Posterior cingulate gyrus (tissue), 11 donors: ENCODE measurements at regions of chr2 and their contacts with region 1.

Region 1: DNA sequence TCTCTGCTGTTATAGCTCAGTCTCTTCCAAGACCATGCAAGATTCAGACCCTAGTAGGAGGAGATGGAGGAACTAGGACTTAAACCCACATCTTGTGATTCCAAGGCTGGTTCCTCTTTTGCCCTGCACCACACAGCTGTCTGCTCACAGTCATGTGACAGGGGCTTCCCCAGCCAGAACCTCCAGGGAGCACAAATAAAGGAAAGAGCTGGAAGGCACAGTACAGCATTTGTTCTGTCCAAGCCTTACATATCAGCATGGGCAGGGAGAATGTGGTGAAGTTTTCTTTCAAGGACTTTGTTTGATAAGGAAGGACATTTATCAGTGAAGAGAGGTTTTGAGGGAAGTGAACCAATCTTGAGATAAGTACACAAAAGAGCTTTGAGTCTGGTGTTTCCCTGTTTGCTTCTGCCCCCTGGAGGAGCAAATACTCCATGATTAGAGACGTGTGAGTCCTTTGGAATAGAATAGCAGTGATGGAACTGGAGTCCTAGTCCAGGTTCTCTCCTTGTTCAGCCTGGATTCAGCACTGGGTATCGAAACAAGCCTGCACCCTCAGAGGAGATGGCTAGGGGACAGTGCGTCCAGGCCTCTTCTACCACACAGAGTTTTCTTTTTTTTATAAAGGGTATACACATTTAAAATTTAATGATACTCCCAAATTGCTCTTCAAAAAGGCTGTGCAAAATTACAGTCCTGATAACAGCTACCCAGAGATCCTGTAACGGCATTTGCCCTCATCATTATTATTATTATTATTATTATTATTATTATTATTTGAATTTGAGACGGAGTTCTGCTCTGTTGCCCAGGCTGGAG is 24.6 kb upstream of the CASP10 start:
- DNase-seq: peak in 8 of 10 donors; percentile 50 to 91 (median 62)

Region 2: DNA sequence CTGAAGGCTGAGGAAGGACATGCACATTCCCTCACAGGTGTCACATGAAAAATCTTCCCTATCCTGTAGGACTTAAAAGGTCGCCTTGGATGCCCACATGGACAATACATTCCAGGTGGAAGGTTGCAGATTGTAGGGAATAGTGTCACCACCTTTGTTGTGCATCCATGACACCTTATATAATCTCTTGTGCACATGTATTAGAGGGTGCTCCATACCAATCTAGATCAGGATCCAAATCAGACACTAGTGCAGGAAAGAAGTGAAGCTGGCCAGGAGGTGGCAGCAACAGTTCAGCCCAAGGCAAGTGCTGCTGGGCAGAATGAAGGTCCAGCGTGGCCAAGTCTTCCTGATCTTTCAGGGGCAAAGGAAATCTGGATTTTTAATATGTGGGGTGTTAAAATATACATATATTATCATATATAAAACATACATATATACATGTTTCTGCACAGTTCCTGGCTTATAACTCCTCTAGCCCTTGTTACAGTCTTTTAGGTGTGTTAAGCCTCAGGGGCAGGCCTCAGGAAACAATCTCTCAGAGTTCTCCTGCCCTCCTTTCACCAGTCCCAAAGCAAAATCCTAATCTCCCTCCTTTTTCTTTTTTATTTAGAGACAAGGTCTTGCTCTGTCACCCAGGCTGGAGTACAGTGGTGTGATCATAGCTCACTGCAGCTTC is 252.6 kb before region 1 on chr2:
- intact Hi-C with region 1: loop called (anchors 5 kb)
- DNase-seq: peak; percentile 50 to 95 (median 79)

Region 3: GRCh38 chr2:201057087-201057521 is 101.2 kb before region 1 on chr2:
- intact Hi-C with region 1: no loop called
- DNase-seq: no peak

Region 4: DNA sequence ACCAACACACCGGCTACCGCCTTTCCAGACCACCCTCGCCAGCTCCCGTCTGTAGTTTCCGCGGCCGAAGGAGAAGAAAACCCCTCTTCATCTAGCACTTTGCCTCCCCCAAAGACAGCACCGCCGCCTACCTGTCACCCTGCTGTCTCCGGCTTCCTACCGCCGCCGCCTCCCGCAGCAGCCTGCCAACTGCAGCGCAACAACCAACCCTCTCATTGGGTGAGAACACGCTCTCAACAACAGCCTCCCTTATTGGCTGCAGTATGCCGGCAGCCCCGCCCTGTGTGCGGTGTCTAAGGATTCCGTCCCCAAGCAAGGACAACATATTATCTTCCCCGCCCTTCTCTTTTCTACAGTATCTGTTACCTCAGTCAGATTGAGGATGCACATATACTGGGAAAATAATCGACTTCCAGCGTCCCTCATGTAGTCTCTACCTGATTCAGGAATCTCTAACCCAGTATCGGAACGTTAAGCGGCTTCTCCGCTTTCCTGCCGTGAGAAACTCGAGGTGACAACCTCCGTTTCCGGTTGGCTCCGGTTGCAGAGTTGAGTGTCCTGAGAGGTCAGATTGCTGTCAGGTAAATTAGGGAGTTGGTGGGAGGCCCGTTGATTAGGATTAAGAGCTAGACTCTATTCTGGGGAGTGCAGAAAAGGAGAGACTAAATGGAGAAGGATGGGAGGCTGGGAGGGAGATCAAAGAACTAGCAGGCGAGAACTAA is 86.7 kb before region 1 on chr2 and contains the starts of genes HYCC2 and NDUFB3:
- intact Hi-C with region 1: loop called (anchors 2 kb)
- DNase-seq: peak; percentile 83 to 98 (median 90)

Region 5: DNA sequence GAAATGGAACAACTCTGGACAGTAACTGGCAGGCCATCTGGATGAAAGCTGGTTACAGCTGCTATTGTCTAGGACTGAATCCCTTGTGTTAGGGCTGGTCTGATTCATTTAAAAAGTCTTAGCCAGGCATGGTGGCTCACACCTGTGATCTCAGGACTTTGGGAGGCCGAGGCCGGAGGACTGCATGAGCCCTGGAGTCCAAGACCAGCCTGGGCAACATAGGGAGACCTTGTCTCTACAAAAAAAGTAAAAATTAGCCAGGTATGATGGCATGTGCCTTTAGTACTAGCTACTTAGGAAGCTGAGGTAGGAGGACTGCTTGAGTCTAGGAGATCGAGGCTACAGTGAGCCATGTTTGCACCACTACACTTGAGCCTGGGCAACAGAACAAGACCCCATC is 57.8 kb before region 1 on chr2:
- intact Hi-C with region 1: no loop called
- DNase-seq: no peak

Region 6: GRCh38 chr2:201118121-201118960 is 40.0 kb before region 1 on chr2:
- intact Hi-C with region 1: loop called (anchors 2 kb)
- DNase-seq: peak; percentile 53 to 95 (median 74)

Region 7: DNA sequence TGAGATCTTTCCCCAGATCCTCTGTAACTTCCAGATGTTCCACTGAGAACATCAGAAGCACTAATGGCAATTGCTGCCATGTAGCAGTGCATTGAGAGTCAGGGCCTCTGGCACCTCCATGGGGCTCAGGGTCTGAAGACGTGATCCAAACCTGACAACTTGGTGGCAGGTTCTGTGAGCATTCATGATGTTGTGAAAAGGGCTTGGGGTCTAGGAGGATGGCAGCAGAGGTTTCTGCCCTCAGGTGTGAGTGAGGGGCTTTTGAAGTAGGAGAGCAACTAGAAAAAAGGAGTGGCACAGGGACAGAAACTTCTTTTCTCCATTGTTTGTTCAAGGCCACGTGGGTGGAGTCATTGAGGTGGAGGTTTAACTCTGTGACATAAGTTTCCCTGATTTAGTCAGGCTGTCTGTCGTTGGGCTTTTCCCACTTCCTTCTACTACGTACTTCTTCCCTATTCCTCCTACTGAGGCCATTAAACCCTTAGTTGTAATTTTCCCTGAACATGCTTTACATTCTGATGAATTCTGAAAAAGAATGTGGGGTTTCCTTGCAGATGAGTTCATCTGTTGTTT is 29.3 kb before region 1 on chr2:
- intact Hi-C with region 1: no loop called
- DNase-seq: no peak